ENCODE measurements at regions of chr16 and their contacts with region 1.

Region 1: DNA sequence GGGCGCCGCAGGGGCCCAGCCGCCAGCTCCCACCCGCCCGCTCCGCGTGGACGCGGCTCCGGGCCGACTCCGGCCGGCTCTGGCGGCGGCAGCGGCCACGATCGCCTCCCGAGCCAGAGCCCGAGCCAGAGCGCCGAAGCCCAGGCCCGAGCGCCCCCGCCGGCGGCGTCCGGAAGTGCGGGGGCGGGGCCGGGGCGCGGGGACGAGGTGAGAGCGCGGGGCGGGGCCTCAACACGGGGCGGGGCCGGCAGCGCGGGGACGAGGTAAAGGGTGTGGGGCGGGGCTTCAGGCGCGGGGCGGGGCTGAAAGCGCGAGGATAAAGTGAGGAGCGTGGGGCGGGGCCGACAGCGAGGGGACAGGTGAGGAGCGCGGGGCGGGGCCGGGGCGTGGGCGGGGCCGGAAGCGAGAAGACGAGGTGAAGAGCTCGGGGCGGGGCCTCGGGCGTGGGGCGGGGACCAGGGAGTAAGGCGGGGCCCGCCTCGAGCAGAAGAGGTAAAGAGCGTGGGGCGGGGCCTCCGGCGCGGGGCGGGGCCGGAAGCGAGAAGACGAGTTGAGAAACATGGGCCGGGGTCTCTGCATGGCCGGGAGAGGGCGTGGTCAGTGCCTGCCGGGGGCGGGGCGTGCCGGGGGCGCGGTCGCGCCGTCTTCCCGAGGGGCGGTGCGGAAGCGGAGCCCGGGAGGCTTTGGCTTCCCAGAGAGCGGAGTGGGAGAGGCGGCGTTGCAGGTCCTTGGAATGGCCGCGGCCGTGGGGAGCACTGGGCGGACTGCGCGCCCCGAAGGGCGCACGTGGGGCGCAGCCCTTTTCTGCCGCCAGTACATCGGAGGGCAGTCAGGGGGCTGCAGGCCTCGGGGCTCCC is at the start of gene AXIN1:
- DNase-seq: peak; percentile 95 to 97
- ATAC-seq: peak; percentile 77 to 90 (median 78)
- H3K4me3 ChIP-seq: peak within 1 kb of the TSS; percentile 60
- H3K4me3 Mint-ChIP-seq: peak within 1 kb of the TSS; percentile 94
- H3K27ac ChIP-seq: peak within 1 kb of the TSS; percentile 76
- H3K27ac Mint-ChIP-seq: peak within 1 kb of the TSS; percentile 89 to 97
- H3K4me1 ChIP-seq: peaks cover 79% of the 10 kb centered on the region
- H3K4me1 Mint-ChIP-seq: peaks cover 56 to 58% of the 10 kb centered on the region in 2 donors
- H3K27me3 ChIP-seq: no peaks in the 10 kb centered on the region
- H3K27me3 Mint-ChIP-seq: no peaks in the 10 kb centered on the region
- CTCF ChIP-seq: peak; percentile 34
- total RNA-seq, gene AXIN1: 100 to 122 (median 106) TPM

Region 2: DNA sequence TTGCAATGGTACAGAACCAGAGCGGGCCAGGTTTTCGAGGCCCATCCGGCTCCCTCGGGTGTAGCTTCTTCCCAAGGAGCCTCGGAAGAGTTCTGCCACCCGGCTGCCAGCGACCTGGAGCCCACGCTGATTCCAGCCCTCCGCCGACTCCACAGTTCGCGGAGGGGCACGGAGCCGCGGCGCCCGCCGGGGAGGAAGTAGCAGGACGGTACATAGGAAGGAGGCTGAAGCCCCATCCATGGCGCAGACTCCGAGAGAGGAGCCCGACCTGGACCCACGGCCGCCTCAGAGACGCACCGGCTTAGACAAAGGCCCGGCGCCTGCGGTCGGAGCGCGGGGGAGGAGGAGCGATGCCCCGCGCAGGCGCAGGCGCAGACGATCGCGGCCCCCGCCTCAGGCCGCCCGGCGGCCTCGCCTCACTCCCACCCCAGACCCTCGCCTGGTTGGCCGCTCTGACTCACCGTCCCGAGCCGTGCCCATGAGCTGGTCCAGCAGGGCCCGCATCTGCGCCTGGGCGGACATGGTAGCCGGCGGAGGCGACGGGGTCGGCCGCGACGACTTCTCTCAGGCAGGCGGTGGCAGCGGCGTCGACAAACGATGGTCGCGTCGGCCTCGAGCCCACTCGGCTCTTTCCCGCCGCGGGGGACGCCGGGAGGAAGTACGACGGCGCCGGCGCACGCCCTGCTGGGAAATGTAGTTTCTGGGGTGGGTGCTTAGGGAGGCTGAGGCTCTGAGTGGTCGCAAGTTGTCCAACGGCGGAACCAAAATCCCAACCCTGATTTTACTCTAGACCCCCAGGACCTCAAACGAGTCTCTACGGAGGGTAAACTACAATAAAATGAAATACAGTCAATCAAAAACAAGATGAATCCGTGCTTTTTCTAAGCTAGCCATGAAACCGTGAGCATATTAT is 123.7 kb before region 1 on chr16 and contains the start of gene LUC7L:
- intact Hi-C with region 1: loop called (anchors 5 kb)
- DNase-seq: peak; percentile 83 to 92
- ATAC-seq: peak; percentile 88 to 93 (median 92)
- H3K4me3 ChIP-seq: peak within 1 kb of the TSS; percentile 90
- H3K4me3 Mint-ChIP-seq: peak within 1 kb of the TSS; percentile 86
- H3K27ac ChIP-seq: peak within 1 kb of the TSS; percentile 94
- H3K27ac Mint-ChIP-seq: peak within 1 kb of the TSS; percentile 89 to 94
- H3K4me1 ChIP-seq: peaks cover 19% of the 10 kb centered on the region
- H3K4me1 Mint-ChIP-seq: peaks cover 21 to 23% of the 10 kb centered on the region in 2 donors
- H3K27me3 ChIP-seq: no peaks in the 10 kb centered on the region
- H3K27me3 Mint-ChIP-seq: no peaks in the 10 kb centered on the region
- CTCF ChIP-seq: no peak
- total RNA-seq, gene LUC7L: 129 to 168 (median 153) TPM

Region 3: DNA sequence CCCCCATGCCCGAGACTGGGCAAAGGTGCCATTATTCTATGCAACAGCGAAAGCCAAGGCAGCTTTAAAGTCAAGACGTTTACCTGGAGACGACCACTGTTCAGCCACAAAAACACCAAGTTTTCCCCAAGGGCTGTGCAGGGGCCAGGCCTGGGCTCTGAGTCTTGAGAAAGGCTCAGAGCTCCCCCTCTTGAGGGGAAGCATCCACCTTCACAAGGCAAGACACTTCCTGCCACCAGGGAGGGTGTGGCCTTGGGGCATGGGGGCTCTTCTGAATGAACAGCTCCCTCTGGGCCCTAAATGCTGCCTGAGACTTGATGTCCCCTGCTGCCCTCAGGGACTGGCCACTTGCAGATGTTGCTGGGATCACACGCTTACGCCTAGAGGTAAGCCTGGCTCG is 43.3 kb before region 1 on chr16:
- intact Hi-C with region 1: loop called (anchors 5 kb)
- DNase-seq: peak in 1 of 2 donors; percentile 61
- ATAC-seq: peak in 1 of 3 donors; percentile 25
- H3K4me3 ChIP-seq: no peak overlapping the region
- H3K4me3 Mint-ChIP-seq: peak overlapping the region; percentile 75
- H3K27ac ChIP-seq: no peak overlapping the region
- H3K27ac Mint-ChIP-seq: peak overlapping the region; percentile 81 to 89
- H3K4me1 ChIP-seq: peaks cover 60% of the 10 kb centered on the region
- H3K4me1 Mint-ChIP-seq: peaks cover 38 to 50% of the 10 kb centered on the region in 2 donors
- H3K27me3 ChIP-seq: no peaks in the 10 kb centered on the region
- H3K27me3 Mint-ChIP-seq: no peaks in the 10 kb centered on the region
- CTCF ChIP-seq: no peak

Measured in natural killer cell (primary cell).